WTC11 (cell line): ENCODE measurements at regions of chr10 and their contacts with region 1.

Region 1: DNA sequence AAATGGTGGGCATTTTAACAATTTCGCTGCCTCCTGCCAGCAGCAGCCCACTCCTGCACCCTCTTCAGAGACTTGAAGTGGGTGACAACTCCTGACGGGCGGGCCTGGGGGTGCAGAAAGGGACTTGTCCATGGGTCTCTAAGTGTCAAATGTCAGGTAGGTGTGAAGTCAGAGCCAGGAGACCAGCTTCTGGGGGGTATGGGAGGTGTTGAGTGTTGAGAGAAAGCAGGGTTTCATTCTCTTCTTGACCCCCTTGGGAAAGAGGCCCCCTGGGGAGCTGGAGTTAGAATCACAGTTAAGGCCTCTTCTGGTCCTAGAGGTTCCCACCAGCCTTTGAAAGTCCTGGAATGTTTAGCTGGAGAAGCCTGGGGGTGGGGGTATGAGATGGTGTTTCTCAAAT is 11.6 kb upstream of the PALD1 start:
- DNase-seq: no peak
- ATAC-seq: no peak
- H3K4me3 Mint-ChIP-seq: no peak overlapping the region
- H3K27ac Mint-ChIP-seq: no peak overlapping the region
- H3K4me1 Mint-ChIP-seq: peaks cover 10% of the 10 kb centered on the region
- H3K27me3 Mint-ChIP-seq: no peaks in the 10 kb centered on the region; the same call in 1 of the 2 replicates
- CTCF ChIP-seq: no peak

Region 2: GRCh38 chr10:70478191-70479164 is 11.5 kb after region 1 on chr10 and contains the start of gene PALD1:
- CTCF ChIA-PET with region 1: interaction called, 59 read pairs
- POLR2A ChIA-PET with region 1: interaction called, 3 read pairs
- DNase-seq: peak; percentile 82
- ATAC-seq: peak; percentile 66
- H3K4me3 Mint-ChIP-seq: peak within 1 kb of the TSS; percentile 78
- H3K27ac Mint-ChIP-seq: peak within 1 kb of the TSS; percentile 57
- H3K4me1 Mint-ChIP-seq: peaks cover 45% of the 10 kb centered on the region
- H3K27me3 Mint-ChIP-seq: peaks cover 2% of the 10 kb centered on the region; the same call in 1 of the 2 replicates
- CTCF ChIP-seq: no peak
- total RNA-seq, gene PALD1: 36.1 to 43.6 TPM (median 38.5 TPM) in 3 replicates

Region 3: GRCh38 chr10:70672165-70673042 is 205.5 kb after region 1 on chr10 and contains the start of gene ADAMTS14:
- CTCF ChIA-PET with region 1: no interaction called
- POLR2A ChIA-PET with region 1: no interaction called
- DNase-seq: peak; percentile 53
- ATAC-seq: peak; percentile 67
- H3K4me3 Mint-ChIP-seq: peak within 1 kb of the TSS; percentile 68
- H3K27ac Mint-ChIP-seq: no peak within 1 kb of the TSS
- H3K4me1 Mint-ChIP-seq: peaks cover 22% of the 10 kb centered on the region
- H3K27me3 Mint-ChIP-seq: peaks cover 51% of the 10 kb centered on the region
- CTCF ChIP-seq: no peak
- total RNA-seq, gene ADAMTS14: 2.1 to 2.4 TPM (median 2.1 TPM) in 3 replicates